ENCODE measurements at regions of chr1 and their contacts with region 1.

Region 1: GRCh38 chr1:1079408-1080121 is 5.5 kb upstream of the RNF223 start:
- DNase-seq: peak; percentile 90
- ATAC-seq: peak; percentile 86
- H3K4me3 ChIP-seq: no peak overlapping the region
- H3K27ac ChIP-seq: peak overlapping the region; percentile 2; the same call in 1 of the 2 replicates
- H3K4me1 ChIP-seq: peaks cover 11% of the 10 kb centered on the region
- H3K27me3 ChIP-seq: no peaks in the 10 kb centered on the region; the same call in 1 of the 2 replicates
- CTCF ChIP-seq: no peak
- POLR2A ChIP-seq: peak; percentile 57; the same call in 1 of the 2 replicates
- RAD21 ChIP-seq: no peak

Region 2: DNA sequence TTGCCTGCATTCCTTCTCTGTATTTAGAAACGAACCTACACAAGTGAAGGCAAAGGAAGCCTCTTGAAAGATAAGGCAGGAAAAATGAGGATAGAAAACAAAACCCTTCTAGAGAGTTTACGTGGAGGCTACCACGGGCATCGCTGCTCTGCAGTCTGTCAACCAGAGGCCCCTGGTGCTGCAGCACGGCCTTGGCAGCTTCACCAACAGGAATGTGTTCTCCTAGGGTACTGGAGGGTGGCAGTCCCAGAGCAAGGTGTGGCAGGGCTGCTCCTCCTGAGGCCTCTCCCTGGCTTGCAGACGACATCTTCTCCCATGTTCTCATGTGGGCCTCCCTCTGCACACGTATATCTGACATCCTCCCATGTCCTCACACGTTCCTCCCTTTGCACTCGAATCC is 213.5 kb before region 1 on chr1:
- CTCF ChIA-PET with region 1: no interaction called
- POLR2A ChIA-PET with region 1: no interaction called
- dilution Hi-C with region 1: no loop called
- in situ Hi-C with region 1: no loop called
- intact Hi-C with region 1: no loop called
- DNase-seq: no peak
- ATAC-seq: no peak
- H3K4me3 ChIP-seq: no peak overlapping the region
- H3K27ac ChIP-seq: no peak overlapping the region
- H3K4me1 ChIP-seq: no peaks in the 10 kb centered on the region
- H3K27me3 ChIP-seq: peaks cover 29% of the 10 kb centered on the region
- CTCF ChIP-seq: no peak
- POLR2A ChIP-seq: no peak
- RAD21 ChIP-seq: no peak

Region 3: GRCh38 chr1:1098681-1099421 is 19.3 kb after region 1 on chr1:
- CTCF ChIA-PET with region 1: no interaction called
- POLR2A ChIA-PET with region 1: no interaction called
- dilution Hi-C with region 1: no loop called
- in situ Hi-C with region 1: no loop called
- intact Hi-C with region 1: loop called (anchors 1 kb)
- DNase-seq: no peak
- ATAC-seq: no peak
- H3K4me3 ChIP-seq: no peak overlapping the region
- H3K27ac ChIP-seq: no peak overlapping the region
- H3K4me1 ChIP-seq: no peaks in the 10 kb centered on the region
- H3K27me3 ChIP-seq: no peaks in the 10 kb centered on the region
- CTCF ChIP-seq: no peak
- POLR2A ChIP-seq: no peak
- RAD21 ChIP-seq: no peak